Activated CD8-positive, alpha-beta T cell treated with anti-CD3 and anti-CD28 coated beads, Interleukin-2, amount 10 ng/mL, durations not matched to agents 7 days and 5 days (primary cell): ENCODE measurements at regions of chr10 and their contacts with region 1.

Region 1: GRCh38 chr10:102394079-102394800 is 1.3 kb upstream of the NFKB2 start:
- DNase-seq: peak; percentile 98
- ATAC-seq: peak; percentile 89
- H3K4me3 Mint-ChIP-seq: peak overlapping the region; percentile 85
- H3K27ac Mint-ChIP-seq: peak overlapping the region; percentile 95
- H3K4me1 Mint-ChIP-seq: peaks cover 35% of the 10 kb centered on the region
- H3K27me3 Mint-ChIP-seq: no peaks in the 10 kb centered on the region

Region 2: GRCh38 chr10:102408728-102409603 is 14.7 kb after region 1 on chr10:
- CTCF ChIA-PET with region 1: interaction called, 24 read pairs
- POLR2A ChIA-PET with region 1: interaction called, 24 read pairs
- DNase-seq: peak; percentile 62
- ATAC-seq: peak; percentile 50
- H3K4me3 Mint-ChIP-seq: peak overlapping the region; percentile 34
- H3K27ac Mint-ChIP-seq: no peak overlapping the region
- H3K4me1 Mint-ChIP-seq: peaks cover 32% of the 10 kb centered on the region
- H3K27me3 Mint-ChIP-seq: peaks cover 22% of the 10 kb centered on the region

Region 3: GRCh38 chr10:102432162-102432950 is 38.1 kb after region 1 on chr10 and contains the start of gene CUEDC2:
- CTCF ChIA-PET with region 1: interaction called, 9 read pairs
- POLR2A ChIA-PET with region 1: interaction called, 23 read pairs
- DNase-seq: peak; percentile 97
- ATAC-seq: peak; percentile 90
- H3K4me3 Mint-ChIP-seq: peak within 1 kb of the TSS; percentile 95
- H3K27ac Mint-ChIP-seq: peak within 1 kb of the TSS; percentile 94
- H3K4me1 Mint-ChIP-seq: peaks cover 47% of the 10 kb centered on the region
- H3K27me3 Mint-ChIP-seq: no peaks in the 10 kb centered on the region
- total RNA-seq, gene CUEDC2: 71.7 to 77.6 TPM

Region 4: GRCh38 chr10:102461187-102462054 is 67.2 kb after region 1 on chr10:
- CTCF ChIA-PET with region 1: interaction called, 15 read pairs
- POLR2A ChIA-PET with region 1: interaction called, 9 read pairs
- DNase-seq: peak; percentile 94
- ATAC-seq: peak; percentile 97
- H3K4me3 Mint-ChIP-seq: peak overlapping the region; percentile 90
- H3K27ac Mint-ChIP-seq: peak overlapping the region; percentile 79
- H3K4me1 Mint-ChIP-seq: peaks cover 32% of the 10 kb centered on the region
- H3K27me3 Mint-ChIP-seq: no peaks in the 10 kb centered on the region

Region 5: DNA sequence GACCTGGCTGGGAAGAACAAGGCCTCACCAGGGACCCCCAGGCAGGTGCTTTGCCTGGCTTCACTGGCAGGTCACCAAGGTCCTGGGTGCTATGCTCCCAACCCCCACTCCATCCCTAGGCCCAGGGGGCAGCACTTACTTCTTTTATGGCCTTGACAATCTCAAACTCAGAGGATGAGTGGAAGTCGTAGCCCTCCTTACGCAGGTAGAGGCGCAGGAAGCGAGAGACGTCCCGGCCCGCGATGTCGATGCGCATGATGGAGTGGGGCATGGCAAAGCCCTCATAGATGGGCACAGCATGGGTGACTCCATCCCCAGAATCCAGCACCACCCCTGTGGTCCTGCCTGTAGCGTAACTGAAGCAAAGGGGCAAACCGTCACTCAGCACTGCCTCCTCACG is 89.8 kb after region 1 on chr10:
- CTCF ChIA-PET with region 1: interaction called, 24 read pairs
- POLR2A ChIA-PET with region 1: interaction called, 10 read pairs
- DNase-seq: no peak
- ATAC-seq: no peak
- H3K4me3 Mint-ChIP-seq: no peak overlapping the region
- H3K27ac Mint-ChIP-seq: no peak overlapping the region
- H3K4me1 Mint-ChIP-seq: peaks cover 2% of the 10 kb centered on the region
- H3K27me3 Mint-ChIP-seq: no peaks in the 10 kb centered on the region